GM12878 (cell line): ENCODE measurements at regions of chr7 and their contacts with region 1.

Region 1: GRCh38 chr7:112898432-112899290 is 108.5 kb upstream of the TMEM168 start:
- DNase-seq: peak; percentile 32
- ATAC-seq: peak; percentile 98
- H3K4me3 ChIP-seq: no peak overlapping the region
- H3K27ac ChIP-seq: no peak overlapping the region
- H3K4me1 ChIP-seq: no peaks in the 10 kb centered on the region
- H3K27me3 ChIP-seq: no peaks in the 10 kb centered on the region
- CTCF ChIP-seq: peak; percentile 76 to 82 (median 80)
- EP300 ChIP-seq: no peak
- POLR2A ChIP-seq: no peak
- RAD21 ChIP-seq: peak; percentile 98

Region 2: GRCh38 chr7:111735661-111736551 is 1162.8 kb before region 1 on chr7:
- CTCF ChIA-PET with region 1: no interaction called
- POLR2A ChIA-PET with region 1: no interaction called
- RAD21 ChIA-PET with region 1: no interaction called
- SMC1A ChIA-PET with region 1: no interaction called
- in situ Hi-C with region 1: no loop called
- intact Hi-C with region 1: loop called (anchors 10 kb)
- DNase-seq: no peak
- ATAC-seq: peak; percentile 72
- H3K4me3 ChIP-seq: no peak overlapping the region
- H3K27ac ChIP-seq: no peak overlapping the region
- H3K4me1 ChIP-seq: no peaks in the 10 kb centered on the region
- H3K27me3 ChIP-seq: no peaks in the 10 kb centered on the region
- CTCF ChIP-seq: peak; percentile 69 to 89 (median 75)
- EP300 ChIP-seq: no peak
- POLR2A ChIP-seq: no peak
- RAD21 ChIP-seq: peak; percentile 95

Region 3: GRCh38 chr7:112550468-112551060 is 348.1 kb before region 1 on chr7:
- CTCF ChIA-PET with region 1: interaction called, 46 read pairs
- POLR2A ChIA-PET with region 1: interaction called, 7 read pairs
- RAD21 ChIA-PET with region 1: interaction called, 12 read pairs
- SMC1A ChIA-PET with region 1: interaction called, 18 read pairs
- in situ Hi-C with region 1: loop called (anchors 5 kb)
- intact Hi-C with region 1: loop called (anchors 1 kb)
- DNase-seq: peak; percentile 23
- ATAC-seq: peak; percentile 90
- H3K4me3 ChIP-seq: no peak overlapping the region
- H3K27ac ChIP-seq: no peak overlapping the region
- H3K4me1 ChIP-seq: no peaks in the 10 kb centered on the region
- H3K27me3 ChIP-seq: no peaks in the 10 kb centered on the region; a peak in 1 of 4 replicates
- CTCF ChIP-seq: peak; percentile 84 to 94 (median 87)
- EP300 ChIP-seq: no peak
- POLR2A ChIP-seq: no peak
- RAD21 ChIP-seq: peak; percentile 100

Region 4: GRCh38 chr7:112571852-112572607 is 326.6 kb before region 1 on chr7:
- CTCF ChIA-PET with region 1: interaction called, 10 read pairs
- POLR2A ChIA-PET with region 1: no interaction called
- RAD21 ChIA-PET with region 1: no interaction called
- SMC1A ChIA-PET with region 1: no interaction called
- in situ Hi-C with region 1: no loop called
- intact Hi-C with region 1: loop called (anchors 1 kb)
- DNase-seq: no peak
- ATAC-seq: peak; percentile 62
- H3K4me3 ChIP-seq: no peak overlapping the region
- H3K27ac ChIP-seq: no peak overlapping the region
- H3K4me1 ChIP-seq: no peaks in the 10 kb centered on the region
- H3K27me3 ChIP-seq: no peaks in the 10 kb centered on the region
- CTCF ChIP-seq: peak in 2 of 3 experiments; percentile 23 to 33; a peak in 3 of 6 replicates
- EP300 ChIP-seq: no peak
- POLR2A ChIP-seq: no peak
- RAD21 ChIP-seq: 0 out of 2 replicates have a peak, but pooled peaks have one; percentile 31

Region 5: GRCh38 chr7:112821345-112821744 is 77.3 kb before region 1 on chr7:
- CTCF ChIA-PET with region 1: interaction called, 3 read pairs
- POLR2A ChIA-PET with region 1: no interaction called
- RAD21 ChIA-PET with region 1: no interaction called
- SMC1A ChIA-PET with region 1: interaction called, 3 read pairs
- in situ Hi-C with region 1: no loop called
- intact Hi-C with region 1: loop called (anchors 5 kb)
- DNase-seq: no peak
- ATAC-seq: no peak
- H3K4me3 ChIP-seq: no peak overlapping the region
- H3K27ac ChIP-seq: no peak overlapping the region
- H3K4me1 ChIP-seq: no peaks in the 10 kb centered on the region
- H3K27me3 ChIP-seq: no peaks in the 10 kb centered on the region
- CTCF ChIP-seq: no peak
- EP300 ChIP-seq: no peak
- POLR2A ChIP-seq: no peak
- RAD21 ChIP-seq: no peak

Region 6: GRCh38 chr7:112963634-112964033 is 65.0 kb after region 1 on chr7:
- CTCF ChIA-PET with region 1: no interaction called
- POLR2A ChIA-PET with region 1: no interaction called
- RAD21 ChIA-PET with region 1: no interaction called
- SMC1A ChIA-PET with region 1: no interaction called
- in situ Hi-C with region 1: no loop called
- intact Hi-C with region 1: no loop called
- DNase-seq: no peak
- ATAC-seq: no peak
- H3K4me3 ChIP-seq: no peak overlapping the region
- H3K27ac ChIP-seq: no peak overlapping the region
- H3K4me1 ChIP-seq: no peaks in the 10 kb centered on the region
- H3K27me3 ChIP-seq: no peaks in the 10 kb centered on the region
- CTCF ChIP-seq: no peak
- EP300 ChIP-seq: no peak
- POLR2A ChIP-seq: no peak
- RAD21 ChIP-seq: no peak